Activated CD4-positive, alpha-beta memory T cell treated with anti-CD3 and anti-CD28 coated beads for 36 hours (primary cell): ENCODE measurements at regions of chr1 and their contacts with region 1.

Region 1: GRCh38 chr1:160519642-160520435 is 3.2 kb downstream of the SLAMF6 start:
- DNase-seq: peak; percentile 66
- H3K4me3 Mint-ChIP-seq: peak overlapping the region; percentile 92
- H3K27ac Mint-ChIP-seq: peak overlapping the region; percentile 92
- H3K4me1 Mint-ChIP-seq: peaks cover 83% of the 10 kb centered on the region
- H3K27me3 Mint-ChIP-seq: no peaks in the 10 kb centered on the region

Region 2: GRCh38 chr1:160169553-160170399 is 350.1 kb before region 1 on chr1:
- CTCF ChIA-PET with region 1: no interaction called
- POLR2A ChIA-PET with region 1: no interaction called
- intact Hi-C with region 1: no loop called
- DNase-seq: peak; percentile 68
- H3K4me3 Mint-ChIP-seq: no peak overlapping the region
- H3K27ac Mint-ChIP-seq: no peak overlapping the region
- H3K4me1 Mint-ChIP-seq: peaks cover 9% of the 10 kb centered on the region
- H3K27me3 Mint-ChIP-seq: peaks cover 18% of the 10 kb centered on the region

Region 3: DNA sequence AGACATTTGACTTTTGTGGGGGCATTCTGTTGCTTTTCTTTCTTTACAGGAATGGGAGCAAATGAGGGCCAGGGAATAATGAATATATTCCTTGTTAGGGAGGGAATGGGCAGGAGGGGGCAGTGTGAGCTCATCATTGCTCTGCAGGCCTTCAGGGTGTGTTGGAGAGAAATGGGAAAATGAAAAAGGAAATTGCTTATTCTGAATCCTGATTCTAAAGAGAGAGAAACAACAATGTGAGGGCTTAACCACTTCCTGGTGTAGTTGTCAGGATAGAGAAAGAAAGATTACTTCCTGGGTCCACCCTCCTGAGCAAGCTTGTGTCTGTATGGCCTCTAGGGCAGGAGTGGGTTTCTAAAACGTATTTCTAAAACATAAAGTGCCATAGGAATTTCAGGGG is 91.2 kb before region 1 on chr1:
- CTCF ChIA-PET with region 1: interaction called, 3 read pairs
- POLR2A ChIA-PET with region 1: interaction called, 3 read pairs
- intact Hi-C with region 1: loop called (anchors 1 kb)
- DNase-seq: peak; percentile 57
- H3K4me3 Mint-ChIP-seq: no peak overlapping the region
- H3K27ac Mint-ChIP-seq: peak overlapping the region; percentile 77
- H3K4me1 Mint-ChIP-seq: peaks cover 60% of the 10 kb centered on the region
- H3K27me3 Mint-ChIP-seq: no peaks in the 10 kb centered on the region

Region 4: DNA sequence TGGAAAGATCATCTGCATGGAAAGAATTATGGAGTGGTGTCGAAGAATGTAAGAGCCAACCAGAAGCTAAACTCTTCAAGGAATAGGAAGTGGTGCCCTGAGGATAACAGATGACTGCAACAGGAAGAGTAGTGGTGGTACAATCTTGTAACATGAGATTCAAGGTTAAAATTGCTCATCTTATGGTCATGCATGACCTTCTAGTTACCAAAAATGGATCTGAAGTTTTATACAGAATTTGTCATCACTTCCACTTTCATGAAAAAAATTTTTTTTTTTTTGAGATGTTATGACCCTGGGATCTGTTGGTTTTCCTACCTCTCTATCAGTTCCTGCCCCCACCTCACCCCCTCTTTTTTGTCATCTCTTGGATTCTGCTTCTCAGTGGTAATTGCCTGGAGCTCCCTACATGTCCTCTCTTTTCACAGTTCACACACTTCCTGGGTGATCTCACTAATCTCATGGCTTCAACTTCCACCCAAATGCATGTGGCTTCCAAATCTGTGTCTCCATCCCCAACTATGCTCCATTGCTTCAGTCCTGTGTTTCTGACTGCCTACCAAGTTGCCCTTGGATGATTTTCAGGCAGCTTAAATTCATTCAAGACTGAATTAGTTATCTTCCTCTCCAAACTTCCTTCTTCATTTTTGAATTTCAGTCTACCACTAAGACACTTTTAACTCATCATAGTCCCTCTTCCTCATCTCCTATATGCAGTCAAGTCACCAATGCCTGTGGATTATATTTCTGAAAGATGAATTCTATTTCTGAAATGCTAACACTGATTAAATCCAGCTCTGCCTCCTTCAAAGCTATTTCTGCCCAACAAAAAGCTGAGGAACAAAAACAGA is 45.2 kb before region 1 on chr1:
- CTCF ChIA-PET with region 1: no interaction called
- POLR2A ChIA-PET with region 1: interaction called, 3 read pairs
- intact Hi-C with region 1: loop called (anchors 2 kb)
- DNase-seq: no peak
- H3K4me3 Mint-ChIP-seq: no peak overlapping the region
- H3K27ac Mint-ChIP-seq: no peak overlapping the region
- H3K4me1 Mint-ChIP-seq: peaks cover 6% of the 10 kb centered on the region
- H3K27me3 Mint-ChIP-seq: no peaks in the 10 kb centered on the region

Region 5: DNA sequence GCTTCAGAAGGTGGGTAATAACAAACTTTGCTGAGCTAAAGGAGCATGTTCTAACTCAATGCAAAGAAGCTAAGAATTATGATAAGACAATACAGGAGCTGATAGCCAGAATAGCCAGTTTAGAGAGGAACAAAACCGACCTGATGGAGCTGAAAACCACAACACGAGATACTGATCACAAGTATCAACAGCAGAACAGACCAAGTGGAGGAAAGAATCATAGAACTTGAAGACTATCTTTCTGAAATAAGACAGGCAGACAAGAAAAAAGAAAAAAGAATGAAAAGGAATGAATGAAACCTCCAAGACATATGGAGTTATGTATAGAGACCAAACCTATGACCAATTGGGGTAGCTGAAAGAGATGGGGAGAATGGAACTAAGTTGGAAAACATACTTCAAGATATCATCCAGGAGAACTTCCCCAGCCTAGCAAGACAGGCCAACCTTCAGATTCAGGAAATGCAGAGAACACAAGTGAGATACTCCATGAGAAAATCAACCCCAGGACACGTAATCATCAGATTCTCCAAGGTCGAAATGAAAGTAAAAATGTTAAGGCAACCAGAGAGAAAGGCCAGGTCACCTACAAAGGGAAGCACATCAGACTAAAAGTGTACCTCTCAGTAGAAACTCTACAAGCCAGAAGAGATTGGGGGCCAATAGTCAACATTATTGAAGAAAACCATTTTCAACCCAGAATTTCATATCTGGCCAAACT is 39.0 kb after region 1 on chr1:
- CTCF ChIA-PET with region 1: interaction called, 3 read pairs
- POLR2A ChIA-PET with region 1: interaction called, 5 read pairs
- intact Hi-C with region 1: loop called (anchors 1 kb)
- DNase-seq: no peak
- H3K4me3 Mint-ChIP-seq: peak overlapping the region; percentile 71
- H3K27ac Mint-ChIP-seq: peak overlapping the region; percentile 91
- H3K4me1 Mint-ChIP-seq: peaks cover 71% of the 10 kb centered on the region
- H3K27me3 Mint-ChIP-seq: no peaks in the 10 kb centered on the region

Region 6: GRCh38 chr1:160590488-160590887 is 70.6 kb after region 1 on chr1:
- CTCF ChIA-PET with region 1: no interaction called
- POLR2A ChIA-PET with region 1: no interaction called
- intact Hi-C with region 1: no loop called
- DNase-seq: no peak
- H3K4me3 Mint-ChIP-seq: no peak overlapping the region
- H3K27ac Mint-ChIP-seq: no peak overlapping the region
- H3K4me1 Mint-ChIP-seq: peaks cover 16% of the 10 kb centered on the region
- H3K27me3 Mint-ChIP-seq: no peaks in the 10 kb centered on the region

Region 7: GRCh38 chr1:160607011-160607671 is 87.3 kb after region 1 on chr1:
- CTCF ChIA-PET with region 1: interaction called, 4 read pairs
- POLR2A ChIA-PET with region 1: no interaction called
- intact Hi-C with region 1: loop called (anchors 1 kb)
- DNase-seq: peak; percentile 74
- H3K4me3 Mint-ChIP-seq: no peak overlapping the region
- H3K27ac Mint-ChIP-seq: peak overlapping the region; percentile 78
- H3K4me1 Mint-ChIP-seq: peaks cover 63% of the 10 kb centered on the region
- H3K27me3 Mint-ChIP-seq: no peaks in the 10 kb centered on the region

Region 8: GRCh38 chr1:160813215-160813614 is 293.4 kb after region 1 on chr1:
- CTCF ChIA-PET with region 1: no interaction called
- POLR2A ChIA-PET with region 1: no interaction called
- intact Hi-C with region 1: no loop called
- DNase-seq: peak; percentile 33
- H3K4me3 Mint-ChIP-seq: no peak overlapping the region
- H3K27ac Mint-ChIP-seq: no peak overlapping the region
- H3K4me1 Mint-ChIP-seq: peaks cover 38% of the 10 kb centered on the region
- H3K27me3 Mint-ChIP-seq: no peaks in the 10 kb centered on the region